ENCODE measurements at regions of chr7 and their contacts with region 1.

Region 1: GRCh38 chr7:29105752-29106668 is 40.3 kb downstream of the CPVL start:
- DNase-seq: peak; percentile 77
- ATAC-seq: peak; percentile 83
- H3K4me3 ChIP-seq: no peak overlapping the region
- H3K27ac ChIP-seq: no peak overlapping the region
- H3K4me1 ChIP-seq: peaks cover 12% of the 10 kb centered on the region
- H3K27me3 ChIP-seq: no peaks in the 10 kb centered on the region
- CTCF ChIP-seq: peak; percentile 82

Region 2: DNA sequence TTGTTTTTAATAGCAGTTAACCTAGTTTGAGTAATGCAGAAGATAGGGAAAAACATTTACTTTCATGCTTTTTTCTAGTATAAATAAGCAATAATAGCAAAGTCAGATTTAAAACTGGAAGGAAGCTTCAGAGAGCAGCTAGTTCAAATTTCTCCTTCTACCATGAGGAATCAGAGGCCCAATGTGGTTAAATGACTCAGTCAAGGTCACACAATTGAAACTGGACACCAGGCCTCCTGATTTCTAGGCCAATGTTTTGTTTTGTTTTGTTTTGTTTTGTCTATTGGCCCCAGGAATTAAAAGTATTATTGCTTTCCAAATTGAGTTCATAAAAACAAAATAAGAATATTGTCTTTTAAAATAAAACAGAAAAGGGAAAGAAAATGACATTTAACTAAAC is 270.2 kb before region 1 on chr7:
- CTCF ChIA-PET with region 1: no interaction called
- POLR2A ChIA-PET with region 1: no interaction called
- intact Hi-C with region 1: no loop called
- DNase-seq: peak; percentile 57
- ATAC-seq: no peak
- H3K4me3 ChIP-seq: no peak overlapping the region
- H3K27ac ChIP-seq: no peak overlapping the region
- H3K4me1 ChIP-seq: peaks cover 10% of the 10 kb centered on the region
- H3K27me3 ChIP-seq: no peaks in the 10 kb centered on the region
- CTCF ChIP-seq: no peak

Region 3: GRCh38 chr7:28921822-28922221 is 184.2 kb before region 1 on chr7:
- CTCF ChIA-PET with region 1: interaction called, 48 read pairs
- POLR2A ChIA-PET with region 1: interaction called, 6 read pairs
- intact Hi-C with region 1: loop called (anchors 1 kb)
- DNase-seq: peak; percentile 81
- ATAC-seq: peak; percentile 89
- H3K4me3 ChIP-seq: 0 out of 2 replicates have a peak overlapping the region, but pooled peaks have one; percentile 7
- H3K27ac ChIP-seq: no peak overlapping the region
- H3K4me1 ChIP-seq: peaks cover 7% of the 10 kb centered on the region; the same call in 1 of the 2 replicates
- H3K27me3 ChIP-seq: no peaks in the 10 kb centered on the region
- CTCF ChIP-seq: peak; percentile 83

Region 4: GRCh38 chr7:28926871-28927597 is 179.0 kb before region 1 on chr7:
- CTCF ChIA-PET with region 1: interaction called, 48 read pairs
- POLR2A ChIA-PET with region 1: interaction called, 6 read pairs
- intact Hi-C with region 1: loop called (anchors 1 kb)
- DNase-seq: peak; percentile 96
- ATAC-seq: peak; percentile 96
- H3K4me3 ChIP-seq: peak overlapping the region; percentile 75
- H3K27ac ChIP-seq: no peak overlapping the region
- H3K4me1 ChIP-seq: peaks cover 5% of the 10 kb centered on the region; the same call in 1 of the 2 replicates
- H3K27me3 ChIP-seq: no peaks in the 10 kb centered on the region
- CTCF ChIP-seq: peak; percentile 87

Region 5: GRCh38 chr7:28955718-28956619 is 150.0 kb before region 1 on chr7:
- CTCF ChIA-PET with region 1: interaction called, 47 read pairs
- POLR2A ChIA-PET with region 1: no interaction called
- intact Hi-C with region 1: loop called (anchors 1 kb)
- DNase-seq: peak; percentile 80
- ATAC-seq: peak; percentile 64
- H3K4me3 ChIP-seq: peak overlapping the region; percentile 80
- H3K27ac ChIP-seq: no peak overlapping the region
- H3K4me1 ChIP-seq: 0 out of 2 replicates have a peak, but pooled peaks cover 9% of the 10 kb centered on the region
- H3K27me3 ChIP-seq: no peaks in the 10 kb centered on the region
- CTCF ChIP-seq: peak; percentile 58

Region 6: DNA sequence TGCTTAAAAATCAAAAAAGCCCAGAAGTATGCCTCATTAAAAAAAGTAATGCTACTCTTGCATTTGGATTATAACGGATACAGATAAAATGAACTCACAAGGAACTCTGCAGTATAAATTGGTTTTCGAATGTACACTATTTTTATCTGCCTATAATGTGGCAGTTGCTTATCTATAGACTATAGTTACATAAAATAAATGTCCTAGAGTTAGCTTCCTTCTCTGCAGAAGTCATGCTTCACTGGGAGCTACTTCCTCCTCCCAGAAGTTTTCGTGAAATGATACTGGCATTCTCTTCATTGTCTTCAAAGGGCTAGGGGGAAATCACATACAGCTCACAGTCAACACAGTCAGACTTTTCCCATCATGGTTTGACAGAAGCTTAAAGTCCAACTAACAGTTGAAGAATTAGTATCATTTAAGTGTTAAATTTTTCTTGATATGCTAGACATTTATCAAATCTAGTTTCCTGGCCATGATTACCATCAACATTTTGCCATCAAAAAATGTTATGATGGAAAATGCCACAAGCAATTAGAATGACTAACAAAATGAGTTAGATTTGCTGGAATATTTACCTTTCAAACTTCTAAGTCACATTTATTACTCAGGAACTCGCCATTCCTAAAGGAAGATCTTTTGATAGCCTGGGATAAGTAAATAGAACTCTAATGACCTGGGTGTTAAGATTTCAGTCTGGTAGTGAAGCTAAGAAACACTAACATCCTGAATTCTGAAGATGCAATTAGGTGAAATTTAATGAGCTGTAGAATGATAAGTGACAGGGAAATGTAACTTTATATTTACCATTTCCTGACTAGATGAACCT is 60.5 kb before region 1 on chr7:
- CTCF ChIA-PET with region 1: interaction called, 13 read pairs
- POLR2A ChIA-PET with region 1: no interaction called
- intact Hi-C with region 1: no loop called
- DNase-seq: peak; percentile 60
- ATAC-seq: peak; percentile 77
- H3K4me3 ChIP-seq: no peak overlapping the region
- H3K27ac ChIP-seq: peak overlapping the region; percentile 59
- H3K4me1 ChIP-seq: peaks cover 11% of the 10 kb centered on the region
- H3K27me3 ChIP-seq: no peaks in the 10 kb centered on the region
- CTCF ChIP-seq: no peak

Region 7: DNA sequence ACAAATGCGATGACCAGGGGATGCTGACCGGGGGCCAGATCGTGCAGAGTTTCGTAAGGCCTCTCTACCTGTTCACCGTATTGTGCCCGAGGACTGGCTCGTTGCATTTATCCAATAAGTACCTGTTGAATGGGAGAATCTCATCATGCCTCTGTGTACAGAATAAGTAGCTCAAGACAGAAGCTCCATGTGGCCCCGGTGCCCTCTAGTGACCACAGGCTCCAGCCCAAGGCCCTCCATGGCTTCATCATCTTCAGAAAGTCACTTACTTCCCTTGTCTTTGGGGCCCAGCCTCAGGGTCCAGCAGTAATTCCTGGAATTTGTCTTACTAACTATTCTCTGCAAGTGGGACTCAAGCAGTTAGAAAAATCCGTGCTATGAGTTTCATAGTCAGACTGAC is 239.6 kb after region 1 on chr7:
- CTCF ChIA-PET with region 1: interaction called, 5 read pairs
- POLR2A ChIA-PET with region 1: interaction called, 5 read pairs
- intact Hi-C with region 1: loop called (anchors 1 kb)
- DNase-seq: peak; percentile 57
- ATAC-seq: peak; percentile 53
- H3K4me3 ChIP-seq: no peak overlapping the region
- H3K27ac ChIP-seq: no peak overlapping the region
- H3K4me1 ChIP-seq: peaks cover 19% of the 10 kb centered on the region
- H3K27me3 ChIP-seq: no peaks in the 10 kb centered on the region
- CTCF ChIP-seq: peak; percentile 65

Region 8: GRCh38 chr7:29408841-29409243 is 302.8 kb after region 1 on chr7:
- CTCF ChIA-PET with region 1: interaction called, 10 read pairs
- POLR2A ChIA-PET with region 1: no interaction called
- intact Hi-C with region 1: no loop called
- DNase-seq: peak; percentile 94
- ATAC-seq: peak; percentile 95
- H3K4me3 ChIP-seq: no peak overlapping the region
- H3K27ac ChIP-seq: no peak overlapping the region
- H3K4me1 ChIP-seq: peaks cover 3% of the 10 kb centered on the region; the same call in 1 of the 2 replicates
- H3K27me3 ChIP-seq: no peaks in the 10 kb centered on the region
- CTCF ChIP-seq: peak; percentile 88

Measured in PC-3 (cell line).